Gastrocnemius medialis (tissue), 4 donors: ENCODE measurements at regions of chr9 and their contacts with region 1.

Region 1: DNA sequence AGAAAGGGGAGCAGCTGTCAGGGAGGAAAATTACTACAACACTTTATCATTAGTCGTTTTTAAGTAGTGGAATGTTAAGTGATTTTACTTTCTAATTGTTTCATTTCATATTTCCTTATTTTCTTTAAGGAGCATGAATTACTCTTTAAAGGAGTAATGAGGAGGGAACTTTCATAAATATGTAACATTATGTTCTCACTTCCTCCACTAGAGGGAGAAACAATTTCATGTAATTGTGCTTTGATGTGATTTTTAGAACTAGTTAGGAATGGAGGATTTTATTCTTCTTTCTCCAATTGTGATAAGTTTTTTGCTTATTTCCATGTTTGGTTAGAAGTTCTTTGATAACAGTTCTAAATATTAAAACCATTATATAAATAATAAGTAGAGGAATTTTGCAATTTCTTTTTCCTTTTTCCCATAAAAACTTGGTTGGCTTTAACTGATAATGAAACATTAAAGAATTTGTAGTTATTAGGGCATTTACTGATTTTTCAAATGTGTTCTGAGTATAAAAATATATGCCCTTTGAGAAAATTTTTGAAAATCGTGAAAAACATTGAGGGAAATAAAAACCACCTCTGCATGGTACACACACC is 25.6 kb downstream of the CEP78 start:
- DNase-seq: no peak
- ATAC-seq: no peak
- H3K4me3 ChIP-seq: no peak overlapping the region
- H3K27ac ChIP-seq: no peak overlapping the region
- H3K4me1 ChIP-seq: no peaks in the 10 kb centered on the region
- H3K27me3 ChIP-seq: no peaks in the 10 kb centered on the region
- CTCF ChIP-seq: peak in 4 of 5 experiments; percentile 22 to 56 (median 36)
- POLR2A ChIP-seq: no peak

Region 2: GRCh38 chr9:78369639-78370219 is 108.2 kb after region 1 on chr9:
- in situ Hi-C with region 1: loop called in 1 of 4 experiments (anchors 5 kb)
- intact Hi-C with region 1: loop called (anchors 5 kb)
- DNase-seq: no peak
- ATAC-seq: no peak
- H3K4me3 ChIP-seq: no peak overlapping the region
- H3K27ac ChIP-seq: no peak overlapping the region
- H3K4me1 ChIP-seq: no peaks in the 10 kb centered on the region
- H3K27me3 ChIP-seq: peaks cover 0 to 3% (median 0%) of the 10 kb centered on the region in 3 donors
- CTCF ChIP-seq: peak in 4 of 5 experiments; percentile 22 to 59 (median 42)
- POLR2A ChIP-seq: no peak

Region 3: GRCh38 chr9:78515108-78515507 is 253.6 kb after region 1 on chr9:
- in situ Hi-C with region 1: no loop called
- intact Hi-C with region 1: no loop called
- DNase-seq: no peak
- ATAC-seq: no peak
- H3K4me3 ChIP-seq: no peak overlapping the region
- H3K27ac ChIP-seq: no peak overlapping the region
- H3K4me1 ChIP-seq: no peaks in the 10 kb centered on the region
- H3K27me3 ChIP-seq: no peaks in the 10 kb centered on the region
- CTCF ChIP-seq: no peak
- POLR2A ChIP-seq: no peak